H1 (cell line): ENCODE measurements at regions of chr2 and their contacts with region 1.

Region 1: GRCh38 chr2:146927080-146927711 is 917.6 kb upstream of the ACVR2A start:
- DNase-seq: peak; percentile 44 to 58
- H3K4me3 ChIP-seq: no peak overlapping the region
- H3K27ac ChIP-seq: no peak overlapping the region
- H3K4me1 ChIP-seq: no peaks in the 10 kb centered on the region; a peak in 2 of 7 replicates
- H3K27me3 ChIP-seq: no peaks in the 10 kb centered on the region
- CTCF ChIP-seq: peak; percentile 70 to 88 (median 85)
- EP300 ChIP-seq: no peak
- POLR2A ChIP-seq: no peak
- RAD21 ChIP-seq: peak; percentile 97

Region 2: DNA sequence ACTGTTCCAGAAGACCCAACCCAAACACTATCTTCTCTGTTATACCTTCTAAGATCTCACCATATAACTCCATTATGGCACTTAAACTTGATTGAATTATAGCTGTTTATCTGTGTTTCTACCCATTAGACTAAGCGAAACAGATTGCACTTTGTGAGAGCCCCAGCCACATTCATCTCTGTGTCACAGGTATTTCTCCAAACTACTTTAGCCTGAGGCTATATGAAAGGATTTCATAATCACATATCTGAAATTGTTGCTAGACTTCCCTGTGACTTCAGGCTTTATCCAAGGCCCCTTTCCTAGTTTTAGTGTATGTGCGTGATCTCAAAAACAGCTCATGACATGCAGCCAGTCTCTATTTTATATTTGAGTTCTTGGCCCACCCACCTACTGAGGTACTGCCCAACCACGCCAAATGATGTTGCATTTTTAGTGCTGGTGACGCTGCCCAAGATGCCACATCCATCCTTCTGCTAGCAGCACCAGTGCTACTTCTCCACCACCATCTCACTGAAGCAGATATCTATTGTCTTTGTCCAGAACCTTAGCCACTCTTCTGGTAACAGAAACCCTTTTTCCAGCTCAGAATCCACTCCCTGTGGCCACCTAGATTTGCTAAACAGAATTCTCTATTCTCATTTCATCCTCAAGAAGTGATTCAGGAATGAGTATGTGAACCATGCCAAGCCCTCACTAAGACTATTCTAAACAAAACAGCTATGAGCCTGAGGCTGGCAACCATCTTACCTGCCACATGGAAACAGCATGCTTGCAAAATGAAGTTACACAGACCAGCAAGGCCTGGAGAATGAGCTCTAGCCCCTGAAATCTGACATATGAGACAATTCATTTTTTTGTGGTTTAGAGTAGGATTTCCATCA is 172.9 kb after region 1 on chr2:
- CTCF ChIA-PET with region 1: no interaction called
- POLR2A ChIA-PET with region 1: no interaction called
- DNase-seq: no peak
- H3K4me3 ChIP-seq: no peak overlapping the region
- H3K27ac ChIP-seq: no peak overlapping the region
- H3K4me1 ChIP-seq: 0 out of 7 replicates have a peak, but pooled peaks cover 0 to under 1% (median 0%) of the 10 kb centered on the region in 4 experiments
- H3K27me3 ChIP-seq: peaks cover 0 to 4% (median under 1%) of the 10 kb centered on the region in 4 experiments; a peak in 2 of 7 replicates
- CTCF ChIP-seq: no peak
- EP300 ChIP-seq: no peak
- POLR2A ChIP-seq: no peak
- RAD21 ChIP-seq: no peak

Region 3: DNA sequence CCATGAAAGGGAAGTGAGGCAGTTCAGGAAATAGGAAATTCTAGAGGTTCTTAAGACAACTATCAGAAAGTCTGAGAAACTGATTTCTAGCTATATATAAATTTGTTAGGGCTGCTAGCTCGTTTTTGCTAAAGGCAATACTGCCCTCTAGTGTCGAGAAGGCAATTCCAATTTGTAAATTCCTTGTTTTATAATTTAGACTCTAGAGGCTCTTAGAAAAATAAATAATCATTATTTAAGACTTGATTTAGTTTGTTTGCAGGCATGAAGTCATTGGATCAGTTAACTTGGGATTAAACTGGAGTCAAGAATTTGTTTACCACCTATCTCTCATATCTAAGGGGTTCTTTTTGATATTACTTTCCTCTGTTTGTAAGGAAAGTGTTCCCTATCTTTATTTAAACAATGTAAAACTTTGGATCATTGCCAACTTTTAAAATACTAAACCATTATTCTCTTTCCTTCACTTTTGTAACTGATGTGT is 983.8 kb after region 1 on chr2:
- CTCF ChIA-PET with region 1: interaction called, 18 read pairs
- POLR2A ChIA-PET with region 1: no interaction called
- DNase-seq: no peak
- H3K4me3 ChIP-seq: no peak overlapping the region
- H3K27ac ChIP-seq: no peak overlapping the region
- H3K4me1 ChIP-seq: no peaks in the 10 kb centered on the region
- H3K27me3 ChIP-seq: no peaks in the 10 kb centered on the region
- CTCF ChIP-seq: peak in 2 of 3 experiments; percentile 38 to 44; a peak in 2 of 4 replicates
- EP300 ChIP-seq: no peak
- POLR2A ChIP-seq: no peak
- RAD21 ChIP-seq: peak; percentile 85 to 88